Activated CD4-positive, alpha-beta memory T cell treated with anti-CD3 and anti-CD28 coated beads for 36 hours (primary cell): ENCODE measurements at regions of chr19 and their contacts with region 1.

Region 1: DNA sequence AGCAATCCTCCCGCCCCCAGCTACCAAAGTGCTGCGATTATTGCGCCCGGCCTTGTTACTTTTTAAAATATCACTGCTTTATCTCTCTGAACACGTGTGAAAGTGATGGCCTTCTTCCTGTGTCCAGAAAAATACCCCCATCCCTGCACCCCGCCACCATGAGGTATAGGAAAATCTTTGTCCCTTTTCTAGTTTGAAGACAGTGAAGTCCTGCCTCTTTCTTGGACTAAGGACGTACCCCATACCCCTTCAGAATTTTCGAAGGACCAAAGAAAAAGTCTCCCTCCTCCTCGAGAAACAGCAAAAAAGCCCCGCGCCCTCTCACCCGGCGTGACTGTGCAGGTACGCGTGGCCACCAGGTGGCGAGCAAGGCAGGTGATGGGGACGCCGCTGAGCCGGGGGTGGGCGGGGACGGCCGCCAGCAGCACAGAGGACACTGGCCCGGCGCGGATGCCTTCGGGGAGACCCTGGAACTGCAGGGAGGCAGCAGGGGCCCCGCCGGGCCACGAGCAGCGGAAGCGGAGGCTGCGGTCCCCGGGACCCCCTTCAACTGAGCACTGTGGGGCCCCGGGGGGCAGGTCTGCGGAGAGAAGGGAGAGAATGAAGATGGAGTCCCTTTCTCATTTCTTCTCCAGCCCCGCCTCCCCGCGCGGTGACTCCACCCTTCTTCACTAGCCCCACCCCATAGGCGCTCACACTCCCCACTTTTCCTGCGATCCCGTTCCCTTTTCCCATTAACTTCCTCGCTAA is 3.2 kb downstream of the VSIG10L start:
- DNase-seq: peak; percentile 92
- H3K4me3 Mint-ChIP-seq: peak overlapping the region; percentile 85
- H3K27ac Mint-ChIP-seq: no peak overlapping the region
- H3K4me1 Mint-ChIP-seq: peaks cover 15% of the 10 kb centered on the region
- H3K27me3 Mint-ChIP-seq: no peaks in the 10 kb centered on the region

Region 2: DNA sequence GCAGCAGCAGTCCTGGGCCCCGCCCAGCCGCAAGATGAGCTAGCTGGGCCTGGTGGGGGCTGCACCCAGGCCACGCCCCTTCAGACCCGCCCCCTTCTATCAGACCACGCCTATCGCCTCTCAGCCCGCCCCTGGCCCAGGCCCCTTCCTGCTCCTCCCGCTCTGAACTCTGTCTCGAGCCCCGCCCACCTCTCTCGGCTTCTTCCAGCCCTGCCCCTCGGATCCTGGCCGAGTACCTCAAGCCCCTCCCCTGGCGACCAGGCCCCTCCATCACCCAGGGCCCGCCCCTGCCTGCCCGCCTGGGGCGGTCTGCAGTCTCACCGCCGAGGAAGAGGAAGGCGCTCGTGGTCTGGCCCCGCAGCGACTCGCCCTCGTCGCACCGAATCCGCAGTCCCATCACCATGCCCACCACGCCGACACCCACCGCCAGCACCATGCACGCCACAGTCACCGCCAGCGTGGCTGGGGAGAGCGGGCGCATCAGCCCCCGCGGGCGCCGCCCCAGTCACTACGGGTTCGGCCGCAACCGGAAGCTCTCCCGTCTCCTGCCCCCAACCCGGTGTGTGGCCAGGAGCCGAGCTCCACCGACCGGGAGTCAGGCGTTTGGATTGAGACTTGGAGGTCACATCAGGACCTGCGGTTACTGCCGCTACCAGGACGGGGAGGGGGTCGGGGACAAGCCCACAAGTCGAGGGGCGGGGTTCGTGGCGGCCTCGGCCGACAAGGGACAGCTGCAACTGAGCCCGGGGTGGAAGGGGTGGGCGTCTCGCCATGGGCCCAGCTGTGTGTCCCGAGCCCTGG is 29.0 kb after region 1 on chr19:
- CTCF ChIA-PET with region 1: interaction called, 9 read pairs
- POLR2A ChIA-PET with region 1: interaction called, 6 read pairs
- intact Hi-C with region 1: loop called (anchors 1 kb)
- DNase-seq: peak; percentile 100
- H3K4me3 Mint-ChIP-seq: peak overlapping the region; percentile 99
- H3K27ac Mint-ChIP-seq: peak overlapping the region; percentile 96
- H3K4me1 Mint-ChIP-seq: peaks cover 57% of the 10 kb centered on the region
- H3K27me3 Mint-ChIP-seq: no peaks in the 10 kb centered on the region

Region 3: DNA sequence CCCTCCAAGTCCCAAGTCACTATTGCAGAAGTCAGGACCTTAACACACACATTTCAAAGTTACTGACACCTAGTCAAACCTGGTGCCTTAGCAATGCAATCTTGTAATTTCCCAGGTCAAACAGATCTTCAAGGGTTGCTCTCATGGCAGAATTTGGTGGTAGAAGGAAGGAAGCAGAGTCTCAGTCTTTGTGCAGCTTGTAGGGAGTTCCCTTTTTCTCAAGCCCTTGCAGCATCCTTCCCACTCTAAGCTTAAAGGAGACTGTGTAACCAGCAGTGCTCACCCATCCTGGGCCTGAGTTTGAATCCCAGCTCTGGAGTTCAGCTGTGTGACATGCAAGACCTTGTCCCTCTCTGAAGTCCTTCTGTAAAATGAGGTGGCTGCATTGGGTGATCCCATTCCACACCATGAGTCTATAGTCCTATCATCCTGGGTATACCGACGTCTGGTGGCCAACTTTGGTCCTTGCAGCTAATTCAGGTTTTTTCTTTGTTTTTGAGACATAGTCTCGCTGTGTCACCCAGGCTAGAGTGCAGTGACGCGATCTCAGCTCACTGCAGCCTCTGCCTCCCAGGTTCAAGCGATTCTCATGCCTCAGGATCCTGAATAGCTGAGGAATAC is 68.9 kb after region 1 on chr19:
- CTCF ChIA-PET with region 1: interaction called, 30 read pairs
- POLR2A ChIA-PET with region 1: no interaction called
- intact Hi-C with region 1: loop called (anchors 1 kb)
- DNase-seq: peak; percentile 56
- H3K4me3 Mint-ChIP-seq: no peak overlapping the region
- H3K27ac Mint-ChIP-seq: no peak overlapping the region
- H3K4me1 Mint-ChIP-seq: peaks cover 7% of the 10 kb centered on the region
- H3K27me3 Mint-ChIP-seq: peaks cover 5% of the 10 kb centered on the region